ENCODE measurements at regions of chr1 and their contacts with region 1.

Region 1: DNA sequence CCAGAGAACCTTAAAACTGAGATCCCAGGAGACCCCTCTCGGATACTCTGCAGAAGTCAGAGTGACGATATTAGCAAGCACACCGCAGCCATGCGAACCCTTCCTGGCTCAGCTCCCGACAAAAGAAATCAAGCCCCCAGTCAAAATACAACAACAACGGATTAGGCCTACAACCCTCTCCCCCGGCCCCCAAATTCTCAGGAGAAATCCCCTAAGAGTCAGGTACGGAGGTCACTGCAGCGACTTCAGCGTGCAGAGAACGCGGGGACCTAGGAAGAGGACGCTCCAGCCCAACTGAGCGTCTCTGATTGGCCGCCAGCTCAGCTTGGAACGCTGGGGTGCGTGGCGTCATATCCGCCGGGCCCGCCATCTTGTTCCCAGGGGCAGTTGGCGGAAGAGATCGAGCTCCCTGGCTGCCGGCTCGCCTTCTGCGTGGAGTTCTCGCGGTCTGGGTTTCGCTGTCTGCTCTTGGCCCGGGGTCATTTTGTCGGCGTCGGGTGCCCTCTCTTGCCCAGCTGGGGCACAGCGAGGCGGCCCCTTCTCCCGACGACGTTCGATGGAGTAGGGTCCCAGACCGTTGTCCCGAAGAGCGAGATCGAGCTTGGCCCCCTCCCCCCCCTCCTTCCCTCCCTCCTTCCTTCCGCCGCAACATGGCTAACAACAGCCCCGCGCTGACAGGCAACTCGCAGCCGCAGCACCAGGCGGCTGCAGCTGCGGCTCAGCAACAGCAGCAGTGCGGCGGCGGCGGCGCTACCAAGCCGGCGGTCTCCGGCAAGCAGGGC is at the start of gene PRPF38B:
- DNase-seq: peak; percentile 84 to 97 (median 93)
- ATAC-seq: peak; percentile 86 to 89 (median 88)
- H3K4me3 ChIP-seq: peak within 1 kb of the TSS; percentile 82 to 83
- H3K4me3 Mint-ChIP-seq: peak within 1 kb of the TSS; percentile 94 to 97 (median 96)
- H3K27ac ChIP-seq: peak within 1 kb of the TSS; percentile 95
- H3K27ac Mint-ChIP-seq: peak within 1 kb of the TSS; percentile 95 to 98
- H3K4me1 ChIP-seq: peaks cover 18 to 19% of the 10 kb centered on the region in 2 experiments
- H3K4me1 Mint-ChIP-seq: peaks cover 43 to 57% (median 44%) of the 10 kb centered on the region in 3 donors
- H3K27me3 ChIP-seq: no peaks in the 10 kb centered on the region
- H3K27me3 Mint-ChIP-seq: no peaks in the 10 kb centered on the region
- total RNA-seq, gene PRPF38B: 109 to 130 (median 110) TPM

Region 2: DNA sequence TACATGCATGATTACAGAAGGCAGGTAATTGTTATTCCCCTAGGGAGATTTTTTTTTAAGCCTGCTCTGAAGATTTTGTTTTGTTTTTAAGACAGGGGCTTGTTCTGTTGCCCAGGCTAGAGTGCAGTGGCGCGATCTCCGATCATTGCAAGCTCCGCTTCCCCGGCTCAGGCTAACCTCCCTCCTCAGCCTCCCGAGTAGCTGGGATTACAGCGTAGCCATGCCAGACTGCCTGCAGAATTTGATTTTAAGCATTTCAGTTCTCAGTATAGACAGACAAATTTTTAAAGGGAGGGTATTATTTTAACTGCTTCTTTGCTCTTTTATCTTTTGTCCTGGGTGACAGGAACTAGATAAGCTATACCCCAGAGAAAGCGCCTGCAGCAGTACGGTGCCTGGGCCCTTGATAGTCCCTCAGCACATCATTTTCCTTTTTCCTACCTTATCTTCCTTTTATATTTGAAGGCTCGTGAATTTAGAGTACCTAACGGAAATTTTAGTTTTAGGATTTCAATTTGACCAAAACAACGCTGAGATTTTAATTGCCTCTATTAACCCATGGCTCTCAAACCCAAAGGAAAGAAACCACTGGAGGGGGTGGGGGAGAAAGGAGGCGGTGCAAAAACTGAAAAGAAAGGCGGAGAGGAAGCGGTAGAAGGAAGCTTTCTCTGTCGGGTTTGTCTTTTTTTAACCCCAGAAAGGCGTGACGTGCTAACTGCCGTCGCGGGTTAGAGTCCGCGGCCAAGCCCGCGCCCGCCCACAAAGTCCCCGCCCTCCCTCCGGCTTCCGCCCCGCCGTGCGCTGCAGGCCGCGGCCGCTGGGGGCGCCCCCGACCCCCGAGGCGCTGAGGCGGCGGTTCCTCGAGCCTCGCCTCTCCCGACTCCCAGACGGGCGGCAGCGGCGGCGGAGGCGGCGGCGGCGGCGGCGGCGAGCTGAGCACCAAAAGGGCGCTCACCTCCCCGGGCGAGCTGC is 132.6 kb before region 1 on chr1 and contains the start of gene EEIG2:
- CTCF ChIA-PET with region 1: interaction called, 4 to 17 read pairs
- POLR2A ChIA-PET with region 1: interaction called in 1 of 2 experiments, 3 read pairs
- DNase-seq: peak; percentile 78 to 95 (median 88)
- ATAC-seq: peak; percentile 89 to 96 (median 92)
- H3K4me3 ChIP-seq: peak within 1 kb of the TSS; percentile 63 to 80
- H3K4me3 Mint-ChIP-seq: peak within 1 kb of the TSS in 2 of 3 donors; percentile 93 to 98
- H3K27ac ChIP-seq: peak within 1 kb of the TSS; percentile 74
- H3K27ac Mint-ChIP-seq: peak within 1 kb of the TSS; percentile 91
- H3K4me1 ChIP-seq: peaks cover 26 to 33% of the 10 kb centered on the region in 2 experiments
- H3K4me1 Mint-ChIP-seq: peaks cover 35 to 44% (median 40%) of the 10 kb centered on the region in 3 donors
- H3K27me3 ChIP-seq: no peaks in the 10 kb centered on the region
- H3K27me3 Mint-ChIP-seq: no peaks in the 10 kb centered on the region
- total RNA-seq, gene EEIG2: 6.7 to 16.2 (median 14.4) TPM

Region 3: DNA sequence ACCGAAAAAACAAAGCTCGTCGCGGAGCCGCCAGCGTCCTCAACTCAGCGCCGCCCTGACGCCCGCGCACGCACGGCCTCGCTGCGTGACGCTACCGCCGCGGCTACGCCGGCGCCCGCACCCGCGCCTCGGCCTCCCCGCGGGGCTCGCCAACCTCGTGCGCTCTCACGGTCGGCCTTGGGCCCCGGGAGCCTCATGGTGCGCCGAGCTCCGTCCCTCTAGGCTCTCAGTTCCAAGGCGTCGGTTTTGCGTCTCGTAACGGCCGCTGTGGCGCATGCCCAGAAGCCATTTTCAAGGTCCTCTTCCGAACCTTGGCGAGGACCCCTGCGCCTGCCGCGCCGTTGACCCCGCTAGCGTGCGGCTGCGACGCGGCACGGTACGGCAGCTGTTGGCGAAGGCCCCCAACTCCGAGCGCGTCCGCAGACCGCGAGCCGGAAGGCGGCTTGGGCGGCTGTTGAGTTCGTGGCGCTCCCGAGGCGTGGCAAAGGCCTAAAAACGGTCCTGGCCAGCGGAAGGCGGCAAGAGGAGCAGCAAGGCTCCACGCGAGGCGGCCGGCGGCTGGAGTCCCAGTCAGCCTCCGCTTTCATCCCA is 31.0 kb before region 1 on chr1 and contains the start of gene HENMT1:
- CTCF ChIA-PET with region 1: interaction called, 5 to 33 read pairs
- POLR2A ChIA-PET with region 1: interaction called, 7 to 33 read pairs
- DNase-seq: peak; percentile 70 to 93 (median 81)
- ATAC-seq: peak; percentile 89 to 91 (median 90)
- H3K4me3 ChIP-seq: peak within 1 kb of the TSS; percentile 58 to 62
- H3K4me3 Mint-ChIP-seq: peak within 1 kb of the TSS; percentile 80 to 85 (median 82)
- H3K27ac ChIP-seq: peak within 1 kb of the TSS; percentile 98
- H3K27ac Mint-ChIP-seq: peak within 1 kb of the TSS; percentile 94 to 95
- H3K4me1 ChIP-seq: peaks cover 8 to 17% of the 10 kb centered on the region in 2 experiments
- H3K4me1 Mint-ChIP-seq: peaks cover 35 to 48% (median 40%) of the 10 kb centered on the region in 3 donors
- H3K27me3 ChIP-seq: no peaks in the 10 kb centered on the region
- H3K27me3 Mint-ChIP-seq: no peaks in the 10 kb centered on the region
- total RNA-seq, gene HENMT1: 11.0 to 20.2 (median 16.0) TPM

Region 4: DNA sequence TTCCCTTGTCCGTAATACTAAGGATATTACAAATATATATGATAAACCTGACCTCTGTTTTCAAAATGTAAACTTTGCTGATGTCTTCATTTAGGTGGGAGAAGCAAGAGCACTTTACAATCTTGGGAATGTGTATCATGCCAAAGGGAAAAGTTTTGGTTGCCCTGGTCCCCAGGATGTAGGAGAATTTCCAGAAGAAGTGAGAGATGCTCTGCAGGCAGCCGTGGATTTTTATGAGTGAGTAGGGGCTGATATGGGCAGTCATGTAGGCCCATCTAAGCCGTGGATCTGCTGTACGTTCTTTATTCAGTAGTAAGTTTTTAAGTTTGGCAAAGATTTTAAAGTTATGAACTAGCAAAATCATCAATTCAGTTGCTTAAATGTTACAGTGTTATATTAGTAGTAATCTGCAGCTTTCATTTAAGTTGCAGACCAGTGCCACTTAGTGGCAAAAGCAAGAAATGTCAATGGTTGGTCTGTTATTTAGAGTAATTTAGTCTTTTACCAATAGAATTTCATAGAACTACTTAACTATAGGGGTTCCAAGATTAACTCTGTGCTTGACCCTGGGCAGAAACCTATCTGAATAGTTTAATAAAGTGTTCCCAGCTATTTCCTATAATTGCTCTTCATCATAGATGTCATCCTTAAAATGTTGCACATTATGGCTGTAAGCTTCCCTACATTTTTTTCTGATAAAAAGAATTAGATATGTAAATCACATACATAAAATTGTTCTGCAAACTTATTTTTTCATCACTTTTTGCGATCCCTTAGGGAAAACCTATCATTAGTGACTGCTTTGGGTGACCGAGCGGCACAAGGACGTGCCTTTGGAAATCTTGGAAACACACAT is 206.0 kb after region 1 on chr1:
- CTCF ChIA-PET with region 1: interaction called, 3 to 16 read pairs
- POLR2A ChIA-PET with region 1: no interaction called
- DNase-seq: peak in 20 of 35 experiments; percentile 6 to 70 (median 16)
- ATAC-seq: peak; percentile 75 to 78 (median 75)
- H3K4me3 ChIP-seq: no peak overlapping the region
- H3K4me3 Mint-ChIP-seq: no peak overlapping the region
- H3K27ac ChIP-seq: no peak overlapping the region
- H3K27ac Mint-ChIP-seq: no peak overlapping the region
- H3K4me1 ChIP-seq: no peaks in the 10 kb centered on the region
- H3K4me1 Mint-ChIP-seq: no peaks in the 10 kb centered on the region
- H3K27me3 ChIP-seq: no peaks in the 10 kb centered on the region
- H3K27me3 Mint-ChIP-seq: no peaks in the 10 kb centered on the region

Region 5: DNA sequence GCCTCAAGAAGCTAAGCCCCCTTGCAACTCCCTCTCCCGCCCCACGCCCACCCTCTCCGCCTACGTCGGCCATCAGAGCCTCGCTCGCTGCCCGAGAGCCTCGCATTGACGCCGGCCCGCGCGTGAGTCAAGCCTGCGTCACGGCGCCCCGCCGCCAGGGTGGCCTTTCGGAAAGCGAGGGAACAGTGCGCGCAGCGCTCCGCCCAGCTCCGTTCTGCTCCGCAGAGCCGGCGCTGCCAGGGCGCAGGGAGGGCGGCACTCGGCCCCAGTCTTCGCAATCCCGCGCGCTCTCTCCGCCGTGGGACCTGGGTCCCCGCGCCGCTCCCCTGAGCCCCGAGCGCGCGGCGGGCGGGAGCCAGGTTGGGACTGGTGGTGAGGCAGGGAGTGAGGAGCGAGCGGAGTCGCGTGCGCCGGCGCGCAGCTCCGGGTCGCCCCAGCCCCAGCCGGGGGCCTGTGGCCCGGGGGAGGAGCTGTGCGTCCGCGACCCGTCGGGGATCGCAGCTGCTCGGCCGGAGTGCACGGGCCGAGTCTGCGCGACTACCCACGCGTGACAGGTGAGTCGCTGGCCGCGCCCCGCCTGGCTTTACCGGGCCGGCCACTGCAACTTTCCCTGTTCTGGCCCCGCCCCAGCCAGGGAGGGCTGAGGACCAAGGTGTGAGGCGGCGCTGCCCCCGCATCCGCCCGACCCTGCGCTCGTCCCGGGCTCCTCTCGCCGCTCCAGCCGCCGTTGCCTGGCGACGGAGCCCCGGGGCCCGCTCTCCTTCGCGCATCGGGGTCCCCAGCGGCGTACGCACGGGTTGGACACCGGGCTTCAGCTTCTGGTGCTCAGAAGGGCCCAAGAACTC is 1458.4 kb after region 1 on chr1 and contains the start of gene SLC6A17:
- CTCF ChIA-PET with region 1: no interaction called
- POLR2A ChIA-PET with region 1: no interaction called
- DNase-seq: no peak
- ATAC-seq: no peak
- H3K4me3 ChIP-seq: no peak within 1 kb of the TSS
- H3K4me3 Mint-ChIP-seq: peak within 1 kb of the TSS in 1 of 3 donors; percentile 3
- H3K27ac ChIP-seq: no peak within 1 kb of the TSS
- H3K27ac Mint-ChIP-seq: peak within 1 kb of the TSS in 1 of 2 donors; percentile 63
- H3K4me1 ChIP-seq: no peaks in the 10 kb centered on the region
- H3K4me1 Mint-ChIP-seq: peaks cover 0 to 4% (median 3%) of the 10 kb centered on the region in 3 donors
- H3K27me3 ChIP-seq: peaks cover 10 to 61% of the 10 kb centered on the region in 2 experiments
- H3K27me3 Mint-ChIP-seq: peaks cover 36 to 42% of the 10 kb centered on the region in 2 donors
- total RNA-seq, gene SLC6A17: not detected